Heart right ventricle (tissue), 16 donors: ENCODE measurements at regions of chr14 and their contacts with region 1.

Region 1: GRCh38 chr14:54189748-54190354 is 207.0 kb upstream of the CDKN3 start:
- DNase-seq: no peak
- ATAC-seq: peak in 1 of 8 donors; percentile 45
- H3K4me3 ChIP-seq: no peak overlapping the region
- H3K27ac ChIP-seq: peak overlapping the region in 1 of 10 donors; percentile 20
- H3K4me1 ChIP-seq: peaks cover 0 to 12% (median 0%) of the 10 kb centered on the region in 9 donors
- H3K27me3 ChIP-seq: no peaks in the 10 kb centered on the region
- CTCF ChIP-seq: no peak

Region 2: DNA sequence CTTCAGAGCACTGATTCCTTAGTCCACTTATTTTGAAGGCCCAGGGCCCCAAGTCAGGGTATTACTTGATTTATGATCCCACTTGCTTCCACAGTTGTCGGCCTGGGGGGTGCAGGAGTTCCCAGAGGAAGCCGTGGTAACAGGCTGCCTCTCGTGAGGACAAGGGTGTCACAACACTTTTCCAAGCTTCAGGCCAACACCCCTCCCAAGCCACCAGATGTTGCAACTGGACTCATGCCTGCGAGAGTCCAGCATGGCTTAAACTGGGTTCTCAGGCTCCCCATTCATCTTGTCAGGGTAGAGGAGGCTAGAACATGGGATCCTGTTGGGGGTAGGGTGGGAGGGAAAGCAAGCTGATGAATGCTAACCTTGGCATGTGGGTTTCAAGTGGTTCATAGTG is 289.4 kb before region 1 on chr14:
- intact Hi-C with region 1: no loop called
- DNase-seq: peak; percentile 14 to 51
- ATAC-seq: peak in 6 of 8 donors; percentile 31 to 91 (median 74)
- H3K4me3 ChIP-seq: no peak overlapping the region
- H3K27ac ChIP-seq: peak overlapping the region in 1 of 10 donors; percentile 36
- H3K4me1 ChIP-seq: peaks cover 0 to 8% (median 0%) of the 10 kb centered on the region in 9 donors
- H3K27me3 ChIP-seq: no peaks in the 10 kb centered on the region
- CTCF ChIP-seq: no peak

Region 3: DNA sequence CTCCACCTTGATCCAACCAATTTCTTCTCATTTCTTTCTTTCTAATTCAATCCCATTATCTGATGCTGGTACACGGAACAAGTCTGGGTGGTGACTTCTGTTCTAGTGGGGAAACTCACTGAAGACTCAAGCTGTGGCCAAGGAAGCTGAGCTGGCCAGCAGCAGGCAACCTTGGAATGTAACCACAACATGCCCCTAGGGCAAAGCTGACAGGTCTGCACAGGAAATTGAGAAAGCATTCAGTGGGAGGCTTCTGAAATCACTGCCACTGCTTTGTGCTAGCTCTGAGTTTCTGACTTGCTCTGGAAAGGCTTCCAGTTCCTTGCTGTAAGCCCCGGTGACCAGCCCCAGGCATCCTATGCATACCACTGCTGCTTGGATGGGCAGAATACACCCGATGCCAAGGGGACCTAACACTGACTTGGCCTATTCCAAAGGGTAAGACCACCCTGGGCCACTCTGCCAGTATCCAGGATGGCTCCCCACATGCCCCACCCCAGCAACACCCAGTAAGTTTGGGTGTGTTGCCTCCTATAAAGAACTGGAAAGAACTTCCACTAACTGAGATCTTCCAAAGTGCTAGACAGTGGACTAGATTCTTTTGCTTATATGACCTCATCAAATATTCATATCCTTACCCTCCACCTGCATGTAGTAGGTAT is 122.4 kb after region 1 on chr14:
- intact Hi-C with region 1: loop called in 1 of 10 experiments (anchors 10 kb)
- DNase-seq: no peak
- ATAC-seq: peak in 1 of 8 donors; percentile 73
- H3K4me3 ChIP-seq: no peak overlapping the region
- H3K27ac ChIP-seq: peak overlapping the region in 1 of 10 donors; percentile 31
- H3K4me1 ChIP-seq: peaks cover 0 to 4% (median 0%) of the 10 kb centered on the region in 9 donors
- H3K27me3 ChIP-seq: peaks cover 0 to 7% (median 0%) of the 10 kb centered on the region in 7 donors
- CTCF ChIP-seq: no peak

Region 4: DNA sequence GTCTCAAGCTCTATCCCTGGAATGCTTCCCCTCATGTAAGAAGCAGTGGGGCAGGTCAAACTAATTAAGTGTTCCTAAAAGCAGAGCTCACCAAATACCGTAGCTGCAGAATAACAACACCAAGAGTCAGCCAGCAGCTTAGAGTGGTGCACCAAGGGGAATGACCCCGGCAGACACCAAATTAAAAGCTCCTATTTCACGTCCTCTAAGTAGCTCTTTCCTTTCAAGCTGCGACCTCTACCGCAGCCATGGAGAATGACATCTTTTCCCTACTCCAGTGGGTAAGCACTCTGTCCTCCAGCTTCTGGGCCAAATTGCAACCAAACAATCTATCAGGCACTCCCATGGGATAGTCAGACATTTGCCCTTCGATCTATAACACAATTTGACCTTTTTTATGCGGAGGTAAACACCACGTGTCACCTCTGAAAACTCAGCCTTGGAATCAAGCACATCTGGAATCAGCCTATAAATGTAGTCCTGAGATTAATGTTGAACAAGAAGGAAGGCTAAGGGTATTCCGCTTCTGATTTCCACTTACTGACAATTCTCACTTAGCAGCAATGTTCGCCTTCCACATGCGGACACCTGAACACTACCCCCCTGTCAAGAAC is 139.3 kb after region 1 on chr14:
- intact Hi-C with region 1: loop called in 1 of 10 experiments (anchors 10 kb)
- DNase-seq: peak in 1 of 2 donors; percentile 47
- ATAC-seq: peak; percentile 64 to 91 (median 82)
- H3K4me3 ChIP-seq: no peak overlapping the region
- H3K27ac ChIP-seq: peak overlapping the region in 2 of 10 donors; percentile 22 to 27
- H3K4me1 ChIP-seq: peaks cover 0 to 13% (median 5%) of the 10 kb centered on the region in 9 donors
- H3K27me3 ChIP-seq: no peaks in the 10 kb centered on the region
- CTCF ChIP-seq: peak in 8 of 9 donors; percentile 45 to 81 (median 75)

Region 5: DNA sequence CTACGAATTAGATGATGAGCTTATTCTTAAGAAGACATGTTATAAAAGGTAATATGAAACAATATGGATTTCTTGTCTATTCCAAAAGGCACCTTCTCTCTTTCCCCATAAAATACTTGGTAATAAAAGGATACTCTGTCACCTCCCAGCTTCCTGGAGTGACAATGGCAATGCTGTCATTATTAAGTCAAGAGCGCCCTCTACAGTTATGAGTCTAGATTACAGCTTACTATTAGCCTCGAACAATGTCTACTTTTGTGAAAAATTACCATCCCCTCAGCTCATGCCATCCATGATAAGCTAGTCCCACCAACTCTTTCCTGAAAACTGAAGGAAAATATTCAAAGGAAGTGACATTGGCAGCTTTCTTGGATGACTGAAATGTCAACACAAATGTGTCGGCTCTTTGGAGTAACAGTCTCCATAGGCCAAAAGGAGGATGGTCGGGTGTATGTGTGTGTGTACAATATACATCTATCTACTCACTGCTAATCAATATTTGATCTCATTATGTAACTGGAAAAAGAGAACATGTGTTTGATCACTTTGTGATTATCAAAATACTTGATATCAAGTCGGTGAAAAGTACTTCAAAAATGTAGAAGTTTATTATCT is 158.3 kb after region 1 on chr14:
- intact Hi-C with region 1: loop called in 1 of 10 experiments (anchors 10 kb)
- DNase-seq: peak in 1 of 2 donors; percentile 32
- ATAC-seq: peak in 6 of 8 donors; percentile 41 to 57 (median 50)
- H3K4me3 ChIP-seq: no peak overlapping the region
- H3K27ac ChIP-seq: peak overlapping the region in 4 of 10 donors; percentile 66 to 83 (median 80)
- H3K4me1 ChIP-seq: peaks cover 0 to 27% (median 21%) of the 10 kb centered on the region in 9 donors
- H3K27me3 ChIP-seq: no peaks in the 10 kb centered on the region
- CTCF ChIP-seq: peak; percentile 55 to 89 (median 75)